Naive thymus-derived CD4-positive, alpha-beta T cell (primary cell): ENCODE measurements at regions of chr17 and their contacts with region 1.

Region 1: GRCh38 chr17:66633317-66633965 is 201.5 kb upstream of the CACNG5 start:
- DNase-seq: peak in 7 of 9 donors; percentile 10 to 51 (median 31)
- ATAC-seq: peak; percentile 81
- H3K4me3 ChIP-seq: no peak overlapping the region
- H3K4me3 Mint-ChIP-seq: peak overlapping the region in 6 of 10 donors; percentile 1 to 41 (median 24)
- H3K27ac ChIP-seq: no peak overlapping the region
- H3K27ac Mint-ChIP-seq: peak overlapping the region in 8 of 9 donors; percentile 3 to 84 (median 72)
- H3K4me1 ChIP-seq: peaks cover 0 to 11% of the 10 kb centered on the region in 2 donors
- H3K4me1 Mint-ChIP-seq: peaks cover 30 to 81% (median 70%) of the 10 kb centered on the region in 7 donors
- H3K27me3 ChIP-seq: no peaks in the 10 kb centered on the region
- H3K27me3 Mint-ChIP-seq: no peaks in the 10 kb centered on the region

Region 2: GRCh38 chr17:65638221-65638975 is 995.0 kb before region 1 on chr17:
- CTCF ChIA-PET with region 1: no interaction called
- POLR2A ChIA-PET with region 1: no interaction called
- intact Hi-C with region 1: no loop called
- DNase-seq: no peak
- ATAC-seq: no peak
- H3K4me3 ChIP-seq: no peak overlapping the region
- H3K4me3 Mint-ChIP-seq: no peak overlapping the region
- H3K27ac ChIP-seq: no peak overlapping the region
- H3K27ac Mint-ChIP-seq: no peak overlapping the region
- H3K4me1 ChIP-seq: no peaks in the 10 kb centered on the region
- H3K4me1 Mint-ChIP-seq: peaks cover 0 to 10% (median under 1%) of the 10 kb centered on the region in 7 donors
- H3K27me3 ChIP-seq: no peaks in the 10 kb centered on the region
- H3K27me3 Mint-ChIP-seq: peaks cover 0 to 4% (median 0%) of the 10 kb centered on the region in 5 donors

Region 3: DNA sequence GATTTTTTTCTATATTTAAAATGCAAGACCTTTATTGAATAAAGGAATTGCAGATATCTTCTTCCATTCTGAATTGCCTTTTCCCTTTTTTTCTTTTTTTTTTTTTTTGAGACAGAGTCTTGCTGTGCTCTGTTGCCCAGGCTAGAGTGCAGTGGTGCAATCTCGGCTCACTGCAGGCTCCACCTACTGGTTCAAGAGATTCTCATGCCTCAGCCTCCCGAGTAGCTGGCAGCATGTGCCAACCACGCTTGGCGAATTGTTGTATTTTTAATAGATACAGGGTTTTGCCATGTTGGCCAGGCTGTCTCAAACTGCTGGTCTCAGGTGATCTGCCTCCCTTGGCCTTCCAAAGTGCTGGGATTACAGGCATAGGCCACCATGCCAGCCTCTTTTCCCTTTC is 593.0 kb before region 1 on chr17:
- CTCF ChIA-PET with region 1: no interaction called
- POLR2A ChIA-PET with region 1: no interaction called
- intact Hi-C with region 1: no loop called
- DNase-seq: no peak
- ATAC-seq: no peak
- H3K4me3 ChIP-seq: no peak overlapping the region
- H3K4me3 Mint-ChIP-seq: no peak overlapping the region
- H3K27ac ChIP-seq: no peak overlapping the region
- H3K27ac Mint-ChIP-seq: no peak overlapping the region
- H3K4me1 ChIP-seq: no peaks in the 10 kb centered on the region
- H3K4me1 Mint-ChIP-seq: no peaks in the 10 kb centered on the region
- H3K27me3 ChIP-seq: no peaks in the 10 kb centered on the region
- H3K27me3 Mint-ChIP-seq: peaks cover 0 to 4% (median 3%) of the 10 kb centered on the region in 5 donors

Region 4: GRCh38 chr17:66115246-66115645 is 518.2 kb before region 1 on chr17:
- CTCF ChIA-PET with region 1: no interaction called
- POLR2A ChIA-PET with region 1: no interaction called
- intact Hi-C with region 1: no loop called
- DNase-seq: no peak
- ATAC-seq: no peak
- H3K4me3 ChIP-seq: no peak overlapping the region
- H3K4me3 Mint-ChIP-seq: no peak overlapping the region
- H3K27ac ChIP-seq: no peak overlapping the region
- H3K27ac Mint-ChIP-seq: no peak overlapping the region
- H3K4me1 ChIP-seq: no peaks in the 10 kb centered on the region
- H3K4me1 Mint-ChIP-seq: no peaks in the 10 kb centered on the region
- H3K27me3 ChIP-seq: no peaks in the 10 kb centered on the region
- H3K27me3 Mint-ChIP-seq: peaks cover 0 to 9% (median 0%) of the 10 kb centered on the region in 5 donors

Region 5: DNA sequence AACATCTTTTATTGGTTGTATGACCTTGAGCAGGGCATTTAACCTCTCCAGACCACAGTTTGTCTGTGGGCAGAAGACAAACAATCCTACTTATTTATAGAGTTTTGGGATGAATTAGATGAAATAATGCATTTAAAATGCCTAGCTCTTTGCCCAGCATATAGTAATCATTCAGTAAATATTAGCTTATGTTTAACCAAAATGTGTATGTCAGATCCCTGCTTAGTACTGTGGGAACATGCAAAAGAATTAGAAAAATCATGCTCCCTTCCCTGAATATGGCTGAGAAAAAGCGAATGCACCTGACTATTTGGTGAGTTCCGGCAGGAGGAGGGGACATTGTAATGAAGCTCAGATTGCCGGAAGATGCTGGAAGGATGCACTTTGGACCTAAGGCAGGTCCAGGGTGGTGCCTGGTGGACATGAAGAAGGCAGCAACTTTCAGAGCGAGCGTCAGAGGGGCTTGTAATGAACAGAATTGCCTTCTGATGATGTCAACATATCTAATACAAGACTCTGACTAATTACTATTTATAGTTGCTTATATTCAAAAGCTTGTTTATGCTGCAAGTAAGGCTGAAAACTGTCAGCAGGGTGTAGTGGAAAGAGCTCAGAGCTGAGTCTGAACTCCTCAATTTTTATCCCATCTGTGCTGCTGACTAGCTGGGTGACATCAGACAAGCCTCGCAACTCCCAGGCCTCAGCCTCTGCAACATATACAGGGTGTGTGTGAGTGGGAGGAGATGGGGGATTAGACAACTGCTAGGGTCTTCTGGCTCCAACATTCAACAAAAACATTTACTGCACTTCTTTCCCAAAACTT is 109.9 kb before region 1 on chr17:
- CTCF ChIA-PET with region 1: no interaction called
- POLR2A ChIA-PET with region 1: no interaction called
- intact Hi-C with region 1: loop called in 1 of 2 experiments (anchors 10 kb)
- DNase-seq: no peak
- ATAC-seq: no peak
- H3K4me3 ChIP-seq: no peak overlapping the region
- H3K4me3 Mint-ChIP-seq: no peak overlapping the region
- H3K27ac ChIP-seq: no peak overlapping the region
- H3K27ac Mint-ChIP-seq: peak overlapping the region in 4 of 9 donors; percentile 14 to 56 (median 25)
- H3K4me1 ChIP-seq: peaks cover 0 to 6% of the 10 kb centered on the region in 2 donors
- H3K4me1 Mint-ChIP-seq: peaks cover 10 to 84% (median 73%) of the 10 kb centered on the region in 7 donors
- H3K27me3 ChIP-seq: no peaks in the 10 kb centered on the region
- H3K27me3 Mint-ChIP-seq: no peaks in the 10 kb centered on the region